ENCODE measurements at regions of chr11 and their contacts with region 1.

Region 1: GRCh38 chr11:129922674-129923073 is 27.3 kb upstream of the NFRKB start:
- DNase-seq: no peak
- ATAC-seq: no peak
- H3K4me3 ChIP-seq: no peak overlapping the region
- H3K27ac ChIP-seq: no peak overlapping the region
- H3K4me1 ChIP-seq: no peaks in the 10 kb centered on the region
- H3K27me3 ChIP-seq: no peaks in the 10 kb centered on the region
- CTCF ChIP-seq: no peak

Region 2: GRCh38 chr11:129605815-129606214 is 316.9 kb before region 1 on chr11:
- intact Hi-C with region 1: no loop called
- DNase-seq: no peak
- ATAC-seq: no peak
- H3K4me3 ChIP-seq: no peak overlapping the region
- H3K27ac ChIP-seq: no peak overlapping the region
- H3K4me1 ChIP-seq: no peaks in the 10 kb centered on the region
- H3K27me3 ChIP-seq: no peaks in the 10 kb centered on the region
- CTCF ChIP-seq: no peak

Region 3: DNA sequence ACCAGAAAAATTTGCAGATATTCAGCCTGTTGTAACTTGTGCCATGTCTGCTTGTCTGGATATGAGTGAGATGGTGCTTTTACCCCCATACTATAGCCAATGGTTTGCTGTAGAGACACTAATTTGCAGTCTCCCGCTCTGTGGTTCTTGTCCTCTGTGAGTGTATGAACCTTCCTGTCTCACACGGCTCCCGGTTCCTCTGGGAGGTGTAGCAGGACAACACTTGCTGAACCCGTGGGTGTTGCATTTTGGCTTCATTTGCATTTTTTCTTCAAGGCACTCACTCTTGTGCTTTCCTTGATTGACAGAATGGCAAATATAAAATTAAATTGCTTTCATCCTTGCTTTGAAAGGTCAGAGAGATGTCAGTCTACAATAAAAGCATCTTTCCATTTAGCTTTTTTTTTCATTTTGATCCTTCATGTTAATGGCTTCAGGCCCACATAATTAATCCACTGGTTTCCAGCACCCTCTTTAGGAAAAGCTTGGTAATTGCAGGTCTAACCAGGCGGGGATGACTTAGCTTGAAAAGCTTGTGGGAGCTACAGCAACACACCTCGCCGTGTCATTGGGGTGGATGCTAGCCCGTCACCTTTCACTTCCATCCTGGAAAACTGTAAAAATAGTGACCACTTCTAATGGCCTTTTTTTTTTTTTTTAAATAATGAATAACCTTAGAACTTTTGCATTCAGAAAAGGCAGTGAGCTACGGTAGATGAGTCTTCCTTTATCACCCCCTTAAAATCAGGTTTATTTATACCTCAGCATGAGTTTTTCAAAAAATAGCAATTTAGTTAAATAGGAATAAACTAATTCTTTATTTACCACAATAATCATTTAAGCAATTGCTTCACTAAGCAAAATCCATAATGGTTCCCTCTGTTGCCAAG is 209.5 kb after region 1 on chr11:
- intact Hi-C with region 1: loop called (anchors 5 kb)
- DNase-seq: no peak
- ATAC-seq: peak; percentile 92
- H3K4me3 ChIP-seq: no peak overlapping the region
- H3K27ac ChIP-seq: no peak overlapping the region
- H3K4me1 ChIP-seq: no peaks in the 10 kb centered on the region
- H3K27me3 ChIP-seq: no peaks in the 10 kb centered on the region
- CTCF ChIP-seq: peak; percentile 82

Region 4: GRCh38 chr11:130168105-130168504 is 245.4 kb after region 1 on chr11:
- intact Hi-C with region 1: no loop called
- DNase-seq: no peak
- ATAC-seq: no peak
- H3K4me3 ChIP-seq: no peak overlapping the region
- H3K27ac ChIP-seq: no peak overlapping the region
- H3K4me1 ChIP-seq: peaks cover 12% of the 10 kb centered on the region
- H3K27me3 ChIP-seq: no peaks in the 10 kb centered on the region
- CTCF ChIP-seq: no peak

Measured in upper lobe of right lung (tissue), 1 donor.